Activated CD4-positive, alpha-beta T cell treated with anti-CD3 and anti-CD28 coated beads for 36 hours (primary cell): ENCODE measurements at regions of chr1 and their contacts with region 1.

Region 1: GRCh38 chr1:198201956-198202784 is 45.4 kb downstream of the NEK7 start:
- DNase-seq: peak; percentile 73
- ATAC-seq: peak; percentile 93
- H3K4me3 Mint-ChIP-seq: peak overlapping the region; percentile 15
- H3K27ac Mint-ChIP-seq: peak overlapping the region; percentile 86
- H3K4me1 Mint-ChIP-seq: peaks cover 75% of the 10 kb centered on the region
- H3K27me3 Mint-ChIP-seq: no peaks in the 10 kb centered on the region

Region 2: GRCh38 chr1:198359024-198359653 is 157.0 kb after region 1 on chr1:
- CTCF ChIA-PET with region 1: no interaction called
- POLR2A ChIA-PET with region 1: no interaction called
- intact Hi-C with region 1: loop called in 1 of 2 experiments (anchors 2 kb)
- DNase-seq: no peak
- ATAC-seq: no peak
- H3K4me3 Mint-ChIP-seq: no peak overlapping the region
- H3K27ac Mint-ChIP-seq: no peak overlapping the region
- H3K4me1 Mint-ChIP-seq: peaks cover 5% of the 10 kb centered on the region
- H3K27me3 Mint-ChIP-seq: no peaks in the 10 kb centered on the region

Region 3: GRCh38 chr1:198399452-198399851 is 197.3 kb after region 1 on chr1:
- CTCF ChIA-PET with region 1: no interaction called
- POLR2A ChIA-PET with region 1: no interaction called
- intact Hi-C with region 1: no loop called
- DNase-seq: no peak
- ATAC-seq: no peak
- H3K4me3 Mint-ChIP-seq: no peak overlapping the region
- H3K27ac Mint-ChIP-seq: no peak overlapping the region
- H3K4me1 Mint-ChIP-seq: peaks cover 3% of the 10 kb centered on the region
- H3K27me3 Mint-ChIP-seq: peaks cover 2% of the 10 kb centered on the region